Naive thymus-derived CD8-positive, alpha-beta T cell (primary cell): ENCODE measurements at regions of chr1 and their contacts with region 1.

Region 1: GRCh38 chr1:52404116-52404986 is at the starts of genes ORC1 and PRPF38A:
- DNase-seq: peak; percentile 89 to 98 (median 96)
- ATAC-seq: peak; percentile 93
- H3K4me3 Mint-ChIP-seq: peak within 1 kb of the TSS; percentile 97 to 100 (median 99)
- H3K27ac Mint-ChIP-seq: peak within 1 kb of the TSS; percentile 93 to 99 (median 99)
- H3K4me1 Mint-ChIP-seq: peaks cover 13 to 46% (median 42%) of the 10 kb centered on the region in 4 donors
- H3K27me3 Mint-ChIP-seq: no peaks in the 10 kb centered on the region
- polyA plus RNA-seq, gene ORC1: 0.18 TPM in 1 of 3 donors, not detected in the others
- polyA plus RNA-seq, gene PRPF38A: 31.2 to 36.5 (median 35.5) TPM

Region 2: GRCh38 chr1:52365746-52366516 is 38.4 kb before region 1 on chr1 and contains the start of gene CC2D1B:
- POLR2A ChIA-PET with region 1: interaction called, 51 read pairs
- DNase-seq: peak; percentile 98 to 100 (median 99)
- ATAC-seq: peak; percentile 87 to 90
- H3K4me3 Mint-ChIP-seq: peak within 1 kb of the TSS; percentile 90 to 97 (median 95)
- H3K27ac Mint-ChIP-seq: peak within 1 kb of the TSS; percentile 92 to 97 (median 96)
- H3K4me1 Mint-ChIP-seq: peaks cover 18 to 61% (median 51%) of the 10 kb centered on the region in 4 donors
- H3K27me3 Mint-ChIP-seq: no peaks in the 10 kb centered on the region
- polyA plus RNA-seq, gene CC2D1B: 4.2 to 10.5 (median 6.7) TPM

Region 3: DNA sequence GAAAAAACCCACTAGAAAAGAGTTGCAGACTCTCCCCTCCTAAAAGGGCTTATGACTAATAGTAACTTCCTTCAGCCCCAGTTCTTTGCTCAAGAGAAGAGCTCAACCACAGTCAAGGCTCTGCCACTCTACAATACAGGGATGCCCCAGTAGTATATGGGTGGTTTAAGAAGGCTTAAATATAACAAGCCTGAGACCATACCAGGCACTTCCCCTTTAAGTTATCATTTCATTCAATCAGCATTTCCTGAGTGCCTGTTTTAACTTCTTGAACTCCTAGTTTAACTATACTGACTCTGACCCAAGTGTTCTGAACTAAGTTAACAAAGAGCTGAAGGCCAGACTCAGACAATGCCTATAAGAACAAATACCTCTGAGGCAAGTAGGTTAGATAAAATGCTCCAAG is 19.9 kb after region 1 on chr1:
- POLR2A ChIA-PET with region 1: interaction called, 33 read pairs
- DNase-seq: peak in 8 of 10 donors; percentile 5 to 68 (median 40)
- ATAC-seq: peak; percentile 89 to 91
- H3K4me3 Mint-ChIP-seq: peak overlapping the region; percentile 51 to 76 (median 69)
- H3K27ac Mint-ChIP-seq: peak overlapping the region; percentile 85 to 98 (median 95)
- H3K4me1 Mint-ChIP-seq: peaks cover 26 to 51% (median 49%) of the 10 kb centered on the region in 4 donors
- H3K27me3 Mint-ChIP-seq: no peaks in the 10 kb centered on the region

Region 4: GRCh38 chr1:52552505-52553361 is 148.4 kb after region 1 on chr1 and contains the start of gene TUT4:
- POLR2A ChIA-PET with region 1: interaction called, 28 read pairs
- DNase-seq: peak in 7 of 10 donors; percentile 61 to 88 (median 70)
- ATAC-seq: peak; percentile 51 to 55
- H3K4me3 Mint-ChIP-seq: peak within 1 kb of the TSS in 8 of 10 donors; percentile 62 to 86 (median 78)
- H3K27ac Mint-ChIP-seq: peak within 1 kb of the TSS; percentile 72 to 95 (median 87)
- H3K4me1 Mint-ChIP-seq: peaks cover 21 to 40% (median 38%) of the 10 kb centered on the region in 4 donors
- H3K27me3 Mint-ChIP-seq: no peaks in the 10 kb centered on the region
- polyA plus RNA-seq, gene TUT4: 31.6 to 40.9 (median 32.7) TPM